Activated CD4-positive, alpha-beta T cell treated with anti-CD3 and anti-CD28 coated beads for 36 hours (primary cell): ENCODE measurements at regions of chr19 and their contacts with region 1.

Region 1: DNA sequence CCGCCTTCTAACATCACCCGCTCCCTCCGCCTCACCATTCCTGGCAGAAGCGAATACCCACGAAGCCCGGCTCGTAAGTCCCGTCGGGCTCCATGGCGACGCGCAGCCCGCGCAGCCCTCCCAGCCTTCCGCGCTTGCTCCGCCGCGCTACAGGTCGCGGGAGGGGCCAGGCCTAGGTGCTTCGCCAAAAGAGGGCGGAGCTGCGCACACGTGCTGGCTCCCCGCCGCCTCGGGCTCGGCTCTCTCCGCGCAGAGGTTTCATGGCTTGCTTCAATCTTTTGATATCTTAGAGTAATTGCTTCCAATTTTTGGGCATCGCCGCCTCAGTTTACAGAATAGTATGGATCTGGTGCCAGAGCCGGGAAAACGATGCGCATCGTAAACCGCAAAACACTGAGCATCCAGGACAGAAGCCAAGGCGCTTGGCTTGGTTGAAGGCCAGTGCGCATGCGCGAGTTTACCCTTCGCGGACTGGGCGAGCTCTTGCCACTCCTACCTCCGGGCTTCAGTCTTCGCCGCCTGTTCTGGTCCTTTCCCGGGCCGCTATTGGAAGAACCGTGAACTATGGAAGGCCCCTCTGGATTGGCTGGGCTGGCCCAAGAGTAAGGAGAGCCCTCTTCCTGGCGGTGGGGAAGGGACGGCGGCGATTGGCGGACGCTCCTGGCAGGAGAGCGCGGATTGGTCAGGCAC is at the start of gene POLR2I:
- DNase-seq: peak; percentile 99
- ATAC-seq: peak; percentile 95
- H3K4me3 Mint-ChIP-seq: peak within 1 kb of the TSS; percentile 98
- H3K27ac Mint-ChIP-seq: peak within 1 kb of the TSS; percentile 93
- H3K4me1 Mint-ChIP-seq: peaks cover 29% of the 10 kb centered on the region
- H3K27me3 Mint-ChIP-seq: no peaks in the 10 kb centered on the region
- total RNA-seq, gene POLR2I: 89.6 to 97.3 TPM

Region 2: DNA sequence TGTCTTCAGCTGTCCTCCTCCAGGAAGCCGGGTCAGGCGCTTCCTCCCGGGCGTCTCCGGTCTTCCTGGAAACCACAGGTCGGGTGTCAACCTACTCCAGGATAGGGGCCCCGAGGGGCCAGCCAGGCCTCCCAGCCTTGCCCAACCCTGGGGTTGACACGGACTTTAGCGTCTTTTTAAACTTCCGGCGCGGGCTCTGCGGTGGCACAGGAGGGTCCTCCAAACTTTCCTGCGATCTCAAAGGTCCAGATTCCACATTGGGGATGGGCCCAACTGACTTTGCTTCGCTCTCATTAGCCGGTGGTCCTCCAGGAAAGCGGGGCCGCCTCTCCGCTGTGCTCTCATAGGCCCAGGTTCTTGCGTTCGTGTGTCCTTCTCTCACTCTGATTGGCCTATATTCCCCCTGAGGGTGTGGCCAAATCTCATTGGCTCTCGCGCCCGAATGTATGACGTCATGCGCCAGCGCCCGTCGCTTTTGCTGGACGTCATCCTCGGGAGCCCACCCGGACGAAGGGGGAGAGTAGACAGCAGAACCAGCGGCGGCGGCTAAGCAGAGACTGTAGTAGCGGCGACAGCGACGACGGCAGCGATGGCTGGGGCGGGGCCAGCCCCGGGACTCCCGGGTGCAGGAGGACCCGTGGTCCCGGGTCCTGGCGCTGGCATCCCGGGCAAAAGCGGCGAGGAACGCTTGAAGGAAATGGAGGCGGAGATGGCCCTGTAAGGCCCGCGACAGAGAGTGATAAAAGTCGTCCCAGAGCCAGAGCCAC is 486.2 kb before region 1 on chr19 and contains the start of gene RBM42:
- CTCF ChIA-PET with region 1: no interaction called
- POLR2A ChIA-PET with region 1: no interaction called
- intact Hi-C with region 1: loop called in 1 of 2 experiments (anchors 1 kb)
- DNase-seq: peak; percentile 97
- ATAC-seq: peak; percentile 100
- H3K4me3 Mint-ChIP-seq: peak within 1 kb of the TSS; percentile 98
- H3K27ac Mint-ChIP-seq: peak within 1 kb of the TSS; percentile 98
- H3K4me1 Mint-ChIP-seq: peaks cover 12% of the 10 kb centered on the region
- H3K27me3 Mint-ChIP-seq: no peaks in the 10 kb centered on the region
- total RNA-seq, gene RBM42: 87.5 to 94.4 TPM

Region 3: DNA sequence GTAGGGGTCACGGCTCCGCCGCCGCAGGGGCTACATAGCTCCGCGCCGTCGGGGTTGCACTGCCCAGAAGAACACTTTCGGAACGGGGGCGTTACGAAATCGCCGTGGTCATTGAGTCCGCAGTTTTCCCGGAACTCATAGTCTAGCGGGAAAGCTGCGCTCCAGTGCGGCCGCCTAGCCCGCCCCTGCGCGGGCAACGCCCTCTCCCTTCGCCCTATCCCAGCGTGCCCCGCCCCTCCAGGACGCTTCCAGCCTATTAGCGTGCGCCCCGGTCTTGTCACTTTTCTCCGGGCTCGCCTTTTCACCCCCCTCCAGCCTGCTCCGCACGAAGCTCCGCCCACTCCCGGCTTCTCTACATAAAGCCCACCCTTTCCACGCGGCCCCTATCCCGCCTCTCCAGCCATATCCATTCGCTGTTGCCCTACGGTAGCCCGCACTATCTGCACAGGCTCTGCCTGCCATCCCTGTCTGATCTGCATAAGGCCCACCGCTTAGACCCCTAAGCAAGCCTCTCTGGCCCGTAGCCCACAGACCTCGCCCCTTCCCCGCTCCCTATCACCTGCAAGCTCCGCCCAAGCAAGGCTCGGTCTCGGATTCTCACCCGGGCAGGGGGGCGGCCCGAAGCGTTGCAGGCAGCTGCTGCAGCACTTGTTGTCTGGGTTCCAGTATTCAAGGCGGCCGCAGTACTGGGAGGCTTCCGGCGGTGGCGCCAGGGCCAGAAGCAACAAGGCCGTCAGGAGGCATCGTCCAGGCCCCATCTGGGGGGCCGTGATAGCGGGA is 374.3 kb before region 1 on chr19:
- CTCF ChIA-PET with region 1: no interaction called
- POLR2A ChIA-PET with region 1: no interaction called
- intact Hi-C with region 1: loop called in 1 of 2 experiments (anchors 1 kb)
- DNase-seq: peak; percentile 99
- ATAC-seq: peak; percentile 67
- H3K4me3 Mint-ChIP-seq: peak overlapping the region; percentile 82
- H3K27ac Mint-ChIP-seq: peak overlapping the region; percentile 96
- H3K4me1 Mint-ChIP-seq: peaks cover 28% of the 10 kb centered on the region
- H3K27me3 Mint-ChIP-seq: no peaks in the 10 kb centered on the region

Region 4: DNA sequence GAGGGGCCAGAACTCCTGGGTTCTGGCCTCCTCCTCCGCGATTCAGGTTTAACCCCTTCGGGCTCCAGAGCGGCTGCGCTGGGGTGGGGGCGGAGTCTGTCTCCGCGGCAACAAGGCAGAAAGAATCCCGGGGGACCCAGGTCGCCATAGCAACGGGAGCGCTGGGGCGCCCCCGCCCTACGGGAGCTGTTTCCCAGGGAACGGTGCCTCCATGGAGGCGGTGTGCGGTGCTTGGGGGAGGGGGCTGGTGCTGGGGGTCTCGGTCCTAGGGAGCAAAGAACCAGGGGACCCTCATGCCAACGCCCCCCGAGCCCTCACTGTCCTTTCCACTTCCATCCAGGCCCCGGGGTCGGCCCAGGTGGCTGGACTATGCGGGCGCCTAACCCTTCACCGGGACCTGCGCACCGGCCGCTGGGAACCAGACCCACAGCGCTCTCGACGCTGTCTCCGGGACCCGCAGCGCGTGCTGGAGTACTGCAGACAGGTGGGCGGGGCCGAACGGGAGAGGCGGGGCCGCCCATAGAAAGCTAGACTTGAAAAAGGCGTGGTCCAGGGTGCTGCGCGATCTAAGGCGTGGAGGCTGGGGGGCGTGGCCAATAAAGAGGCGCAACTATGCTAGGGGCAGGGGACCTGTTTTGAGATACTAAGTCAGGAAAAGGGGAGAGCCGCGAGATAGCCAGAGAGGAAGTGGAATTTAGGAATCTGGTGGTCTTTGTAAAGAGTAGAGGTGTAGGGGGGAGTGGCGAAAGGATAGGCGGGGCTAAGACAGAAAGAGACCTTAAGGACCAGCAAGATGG is 245.4 kb before region 1 on chr19:
- CTCF ChIA-PET with region 1: no interaction called
- POLR2A ChIA-PET with region 1: no interaction called
- intact Hi-C with region 1: loop called in 1 of 2 experiments (anchors 1 kb)
- DNase-seq: peak; percentile 95
- ATAC-seq: peak; percentile 93
- H3K4me3 Mint-ChIP-seq: peak overlapping the region; percentile 52
- H3K27ac Mint-ChIP-seq: no peak overlapping the region
- H3K4me1 Mint-ChIP-seq: peaks cover 14% of the 10 kb centered on the region
- H3K27me3 Mint-ChIP-seq: peaks cover 37% of the 10 kb centered on the region

Region 5: GRCh38 chr19:35995048-35995993 is 119.6 kb before region 1 on chr19 and contains the start of gene SDHAF1:
- CTCF ChIA-PET with region 1: no interaction called
- POLR2A ChIA-PET with region 1: no interaction called
- intact Hi-C with region 1: loop called in 1 of 2 experiments (anchors 1 kb)
- DNase-seq: peak; percentile 98
- ATAC-seq: peak; percentile 85
- H3K4me3 Mint-ChIP-seq: peak within 1 kb of the TSS; percentile 94
- H3K27ac Mint-ChIP-seq: peak within 1 kb of the TSS; percentile 96
- H3K4me1 Mint-ChIP-seq: peaks cover 34% of the 10 kb centered on the region
- H3K27me3 Mint-ChIP-seq: no peaks in the 10 kb centered on the region
- total RNA-seq, gene SDHAF1: 16.0 to 19.2 TPM

Region 6: DNA sequence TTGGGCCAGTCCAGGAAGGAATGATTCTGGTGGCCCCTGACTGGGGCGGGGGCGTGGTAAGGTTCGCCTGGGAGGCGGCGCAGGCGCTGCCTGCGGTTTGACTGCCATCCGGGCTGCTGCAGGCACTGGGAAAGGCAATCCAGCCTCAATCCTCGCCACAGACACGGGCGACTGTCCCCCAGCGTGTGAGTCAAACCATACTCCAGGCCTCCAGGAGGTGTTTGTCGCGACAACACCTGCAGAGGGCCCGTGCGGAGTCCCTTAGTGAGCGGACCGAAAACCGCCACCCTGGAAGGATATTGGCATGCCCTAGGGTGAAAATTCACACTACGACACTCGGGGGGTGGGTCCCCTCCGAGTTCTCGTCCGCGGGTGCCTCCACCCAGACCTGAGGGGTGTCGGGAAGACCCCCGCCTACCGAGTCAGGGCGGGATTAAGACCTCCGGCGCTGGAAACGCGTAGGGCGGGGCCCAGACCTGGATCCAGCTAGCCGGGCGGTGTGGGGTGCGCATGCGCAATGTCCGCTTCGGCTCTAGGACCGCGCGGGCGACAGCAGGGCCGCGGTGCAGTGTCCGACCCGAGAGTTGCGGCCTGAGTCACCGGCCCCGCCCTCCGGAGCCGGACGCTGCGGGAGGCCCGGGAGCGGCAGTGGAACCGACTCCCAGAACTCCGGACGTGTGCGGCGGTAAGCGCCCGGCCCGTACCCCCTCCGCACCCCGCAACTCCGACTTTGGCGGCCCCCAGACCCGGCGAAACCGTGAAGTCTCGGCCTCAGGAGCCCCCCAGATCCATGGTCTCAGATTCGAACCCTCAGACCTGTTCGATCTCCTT is 24.8 kb after region 1 on chr19 and contains the start of gene CAPNS1:
- CTCF ChIA-PET with region 1: no interaction called
- POLR2A ChIA-PET with region 1: interaction called, 3 read pairs
- intact Hi-C with region 1: loop called (anchors 1 kb)
- DNase-seq: peak; percentile 96
- ATAC-seq: peak; percentile 74
- H3K4me3 Mint-ChIP-seq: peak within 1 kb of the TSS; percentile 97
- H3K27ac Mint-ChIP-seq: peak within 1 kb of the TSS; percentile 97
- H3K4me1 Mint-ChIP-seq: peaks cover 26% of the 10 kb centered on the region
- H3K27me3 Mint-ChIP-seq: no peaks in the 10 kb centered on the region
- total RNA-seq, gene CAPNS1: 345 to 452 TPM

Region 7: GRCh38 chr19:36687214-36688056 is 572.5 kb after region 1 on chr19 and contains the start of gene ZNF567:
- CTCF ChIA-PET with region 1: no interaction called
- POLR2A ChIA-PET with region 1: no interaction called
- intact Hi-C with region 1: loop called in 1 of 2 experiments (anchors 1 kb)
- DNase-seq: peak; percentile 99
- ATAC-seq: peak; percentile 93
- H3K4me3 Mint-ChIP-seq: peak within 1 kb of the TSS; percentile 99
- H3K27ac Mint-ChIP-seq: peak within 1 kb of the TSS; percentile 96
- H3K4me1 Mint-ChIP-seq: peaks cover 27% of the 10 kb centered on the region
- H3K27me3 Mint-ChIP-seq: no peaks in the 10 kb centered on the region
- total RNA-seq, gene ZNF567: 7.4 to 8.6 TPM